Left colon (tissue), 2 donors: ENCODE measurements at regions of chr17 and their contacts with region 1.

Region 1: DNA sequence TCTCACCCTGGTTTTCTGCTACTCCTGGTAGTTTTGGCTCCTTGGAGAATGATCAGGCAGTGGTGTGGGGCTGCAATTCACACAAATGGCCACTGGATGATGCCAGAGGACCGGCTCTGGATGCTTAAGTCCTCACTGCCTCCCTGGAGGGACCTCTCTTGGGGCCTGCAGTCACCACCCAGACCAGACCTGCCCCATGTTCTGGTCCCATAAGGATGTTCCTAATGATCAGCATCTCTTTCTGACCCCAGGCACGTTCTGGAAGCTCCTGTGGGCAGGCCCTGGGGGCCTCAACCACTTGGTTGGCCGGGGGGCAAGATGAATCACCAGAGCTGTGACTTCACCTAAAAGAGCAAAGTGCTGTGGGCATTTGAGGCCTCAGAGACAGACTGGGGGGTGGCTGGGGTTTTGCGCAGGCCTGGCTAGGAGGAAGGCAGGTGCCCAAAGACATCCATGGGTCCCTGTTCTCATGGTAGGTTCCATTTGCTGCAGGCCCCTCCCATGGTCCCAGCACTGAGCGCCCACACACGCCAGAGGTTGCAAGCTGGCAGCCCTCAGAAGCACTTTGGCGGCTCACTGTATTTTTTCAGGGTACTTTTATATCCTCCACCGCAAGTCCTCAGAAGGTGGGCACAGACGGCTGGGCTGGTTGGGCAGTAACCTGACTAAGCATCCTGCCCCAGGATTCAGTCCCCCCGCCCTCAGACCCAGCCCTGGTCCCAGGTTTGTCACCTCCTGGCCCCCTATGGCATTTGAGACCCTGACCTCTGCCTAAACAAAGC is 53.2 kb downstream of the NT5M start:
- DNase-seq: peak; percentile 43 to 76
- ATAC-seq: peak; percentile 95

Region 2: GRCh38 chr17:17440010-17440843 is 83.9 kb after region 1 on chr17:
- intact Hi-C with region 1: no loop called
- DNase-seq: peak; percentile 46 to 73
- ATAC-seq: peak; percentile 72

Region 3: GRCh38 chr17:17641621-17642409 is 285.5 kb after region 1 on chr17:
- intact Hi-C with region 1: loop called (anchors 2 to 5 kb)
- DNase-seq: peak; percentile 62 to 75
- ATAC-seq: peak; percentile 89